Gastrocnemius medialis (tissue), 4 donors: ENCODE measurements at regions of chr3 and their contacts with region 1.

Region 1: DNA sequence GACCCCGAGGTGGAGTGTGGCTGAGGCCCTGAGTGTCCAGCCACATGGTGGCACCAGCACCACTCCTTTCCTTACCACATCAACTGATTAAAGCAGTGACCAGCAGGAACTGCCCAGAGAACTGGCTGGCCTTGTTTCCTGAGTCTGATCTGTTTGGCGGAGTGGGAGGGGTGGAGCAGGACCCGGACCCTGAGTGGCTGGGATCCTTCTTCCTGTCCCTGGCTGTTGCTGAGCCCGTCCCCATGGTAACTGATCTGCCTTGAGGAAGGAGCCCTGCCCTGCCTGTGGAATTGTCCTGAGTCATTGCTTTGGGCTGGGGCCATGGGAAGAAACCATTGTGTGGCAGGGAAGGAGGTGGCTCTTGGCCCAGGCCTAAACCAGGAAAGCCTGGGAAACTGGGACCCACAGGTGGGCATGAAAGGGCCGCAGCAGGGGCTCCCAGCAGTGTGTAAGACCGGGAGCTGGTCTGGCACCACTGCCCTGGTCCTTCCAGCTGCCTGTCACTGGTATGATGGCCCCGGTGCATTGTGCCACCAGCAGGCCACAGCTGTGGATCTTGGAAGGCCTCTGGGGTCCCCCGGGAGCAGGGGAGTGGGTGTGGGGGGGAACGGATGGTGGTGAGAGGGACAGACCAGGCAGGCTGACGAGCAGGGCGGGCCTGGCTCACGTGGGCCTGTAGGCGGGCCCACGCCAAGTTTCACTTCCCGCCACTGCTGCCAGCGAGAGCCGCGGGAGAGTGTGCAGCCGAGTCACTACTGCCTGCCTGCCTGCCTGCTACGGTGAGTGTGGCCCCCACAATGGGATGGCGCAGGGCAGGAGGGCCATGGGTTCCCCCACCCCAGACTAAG is 19.2 kb downstream of the ATRIP start:
- DNase-seq: peak; percentile 99
- ATAC-seq: peak; percentile 92 to 96
- H3K4me3 ChIP-seq: peak overlapping the region; percentile 56 to 76 (median 70)
- H3K27ac ChIP-seq: peak overlapping the region; percentile 99 to 100 (median 100)
- H3K4me1 ChIP-seq: peaks cover 39 to 40% of the 10 kb centered on the region in 2 donors
- H3K27me3 ChIP-seq: no peaks in the 10 kb centered on the region
- CTCF ChIP-seq: peak in 4 of 5 experiments; percentile 81 to 88 (median 86)
- POLR2A ChIP-seq: peak; percentile 77 to 83

Region 2: DNA sequence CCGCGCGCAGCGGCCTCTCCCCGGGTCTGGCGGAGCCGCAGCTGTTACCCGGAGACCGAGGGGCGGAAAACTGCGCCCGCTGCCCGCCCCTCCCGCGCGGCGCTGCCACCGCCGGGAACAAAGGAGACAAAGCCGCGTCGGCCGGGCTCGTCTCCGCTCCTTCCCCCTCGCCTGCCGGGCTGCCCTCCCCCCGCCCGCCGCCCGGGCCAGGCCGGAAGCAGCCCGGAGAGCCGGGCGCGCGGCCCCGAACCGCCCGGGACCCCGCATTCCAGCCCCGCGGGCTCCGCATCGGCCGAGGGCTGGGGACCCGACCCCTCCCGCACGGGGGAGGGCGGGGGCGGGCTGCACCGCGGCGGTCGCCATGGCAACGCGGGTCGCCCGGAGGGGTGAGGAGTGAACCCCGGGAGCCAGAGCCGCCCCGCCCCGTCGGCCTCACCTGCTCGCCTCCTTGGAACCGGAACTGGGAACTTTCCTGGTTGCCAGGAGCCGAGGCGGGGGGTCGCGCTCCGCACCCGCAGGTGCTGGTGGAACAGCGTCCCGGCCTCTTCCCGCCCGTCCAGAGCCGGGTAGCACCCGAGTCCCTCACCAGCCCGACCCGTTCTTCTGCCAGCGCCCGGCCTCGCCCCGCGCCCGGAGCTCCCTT is 36.3 kb before region 1 on chr3:
- in situ Hi-C with region 1: no loop called
- intact Hi-C with region 1: loop called (anchors 1 kb)
- DNase-seq: peak in 1 of 2 donors; percentile 17
- ATAC-seq: peak; percentile 52 to 57
- H3K4me3 ChIP-seq: peak overlapping the region; percentile 65 to 78 (median 74)
- H3K27ac ChIP-seq: peak overlapping the region; percentile 23 to 73 (median 58)
- H3K4me1 ChIP-seq: peaks cover 5 to 9% of the 10 kb centered on the region in 2 donors
- H3K27me3 ChIP-seq: peaks cover 0 to 10% (median 0%) of the 10 kb centered on the region in 3 donors
- CTCF ChIP-seq: no peak
- POLR2A ChIP-seq: peak in 1 of 2 donors; percentile 4

Region 3: DNA sequence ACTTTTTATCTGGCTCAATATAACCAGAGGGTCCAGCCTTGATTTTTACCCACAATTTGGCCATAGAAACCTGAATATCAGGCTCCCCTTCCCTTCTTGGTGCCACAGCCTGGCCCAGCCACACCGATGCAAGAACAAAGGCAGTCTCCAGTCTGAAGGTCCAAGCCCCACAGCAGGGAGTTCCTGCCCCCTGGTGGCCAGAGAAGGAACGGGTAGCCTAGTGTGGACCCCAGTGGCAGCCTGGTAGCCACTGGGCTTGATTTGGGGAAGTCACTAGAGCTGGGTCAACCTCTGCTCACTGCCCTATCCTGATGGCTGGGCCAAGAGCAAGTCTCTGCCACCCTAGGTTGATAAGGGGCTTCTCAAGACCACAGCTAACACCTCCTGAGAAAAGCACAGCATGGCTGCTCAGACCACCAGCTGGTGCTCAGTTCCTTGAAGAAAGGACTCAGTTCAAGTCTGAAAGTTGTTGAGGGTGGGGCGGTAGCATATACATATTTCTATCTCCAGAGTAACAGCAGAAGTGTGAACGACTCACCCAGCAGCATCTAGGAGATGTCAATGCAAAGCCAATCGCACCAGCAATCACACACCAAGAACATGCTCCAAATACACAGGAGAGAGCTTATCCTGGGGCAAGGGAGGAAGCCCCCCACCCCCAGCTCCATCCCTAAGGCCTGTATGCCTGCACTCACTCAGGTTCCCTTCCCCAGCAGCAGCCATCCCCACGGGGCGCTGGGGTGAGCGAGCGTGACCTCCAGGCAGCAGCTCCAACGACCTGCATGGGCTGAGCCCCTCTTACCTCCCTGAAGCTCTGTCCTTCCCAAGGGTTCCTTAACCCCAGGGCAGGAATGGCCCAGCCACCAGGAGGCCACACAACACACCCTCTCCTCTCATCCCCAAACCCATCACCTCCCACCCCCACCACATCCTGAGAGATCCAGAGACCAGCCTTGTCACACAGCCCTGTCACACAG is 83.3 kb after region 1 on chr3:
- in situ Hi-C with region 1: loop called in 2 of 4 experiments (anchors 5 to 10 kb)
- intact Hi-C with region 1: loop called (anchors 1 kb)
- DNase-seq: peak; percentile 71 to 82
- ATAC-seq: peak; percentile 93 to 96
- H3K4me3 ChIP-seq: no peak overlapping the region
- H3K27ac ChIP-seq: no peak overlapping the region
- H3K4me1 ChIP-seq: peaks cover 0 to under 1% of the 10 kb centered on the region in 2 donors
- H3K27me3 ChIP-seq: no peaks in the 10 kb centered on the region
- CTCF ChIP-seq: peak; percentile 85 to 96 (median 96)
- POLR2A ChIP-seq: no peak

Region 4: GRCh38 chr3:48609088-48610005 is 143.6 kb after region 1 on chr3 and contains the start of gene UQCRC1:
- in situ Hi-C with region 1: no loop called
- intact Hi-C with region 1: loop called (anchors 5 kb)
- DNase-seq: peak; percentile 88 to 91
- ATAC-seq: peak; percentile 98
- H3K4me3 ChIP-seq: peak within 1 kb of the TSS; percentile 87 to 96 (median 94)
- H3K27ac ChIP-seq: peak within 1 kb of the TSS; percentile 90 to 98 (median 95)
- H3K4me1 ChIP-seq: peaks cover 16 to 21% of the 10 kb centered on the region in 2 donors
- H3K27me3 ChIP-seq: no peaks in the 10 kb centered on the region
- CTCF ChIP-seq: peak; percentile 85 to 91 (median 86)
- POLR2A ChIP-seq: peak; percentile 93
- total RNA-seq, gene UQCRC1: 679 to 861 (median 720) TPM

Region 5: GRCh38 chr3:48685602-48686511 is 220.1 kb after region 1 on chr3 and contains the start of gene NCKIPSD:
- in situ Hi-C with region 1: no loop called
- intact Hi-C with region 1: loop called (anchors 5 kb)
- DNase-seq: peak; percentile 66 to 82
- ATAC-seq: peak; percentile 92 to 95
- H3K4me3 ChIP-seq: peak within 1 kb of the TSS; percentile 69 to 96 (median 84)
- H3K27ac ChIP-seq: peak within 1 kb of the TSS; percentile 73 to 92 (median 90)
- H3K4me1 ChIP-seq: peaks cover 30 to 36% of the 10 kb centered on the region in 2 donors
- H3K27me3 ChIP-seq: no peaks in the 10 kb centered on the region
- CTCF ChIP-seq: peak; percentile 64 to 96 (median 90)
- POLR2A ChIP-seq: peak; percentile 62 to 77
- total RNA-seq, gene NCKIPSD: 13.2 to 33.1 (median 19.4) TPM